ENCODE measurements at regions of chr20 and their contacts with region 1.

Region 1: GRCh38 chr20:35443003-35443402 is 5.0 kb upstream of the GDF5 start:
- DNase-seq: no peak
- ATAC-seq: no peak
- H3K4me3 ChIP-seq: no peak overlapping the region
- H3K27ac ChIP-seq: no peak overlapping the region
- H3K4me1 ChIP-seq: peaks cover 6% of the 10 kb centered on the region
- H3K27me3 ChIP-seq: no peaks in the 10 kb centered on the region
- CTCF ChIP-seq: no peak

Region 2: GRCh38 chr20:35303735-35304491 is 139.1 kb before region 1 on chr20:
- intact Hi-C with region 1: loop called (anchors 5 kb)
- DNase-seq: peak; percentile 76
- ATAC-seq: peak; percentile 87
- H3K4me3 ChIP-seq: no peak overlapping the region
- H3K27ac ChIP-seq: no peak overlapping the region
- H3K4me1 ChIP-seq: no peaks in the 10 kb centered on the region
- H3K27me3 ChIP-seq: no peaks in the 10 kb centered on the region
- CTCF ChIP-seq: peak; percentile 94